ENCODE measurements at regions of chr1 and their contacts with region 1.

Region 1: DNA sequence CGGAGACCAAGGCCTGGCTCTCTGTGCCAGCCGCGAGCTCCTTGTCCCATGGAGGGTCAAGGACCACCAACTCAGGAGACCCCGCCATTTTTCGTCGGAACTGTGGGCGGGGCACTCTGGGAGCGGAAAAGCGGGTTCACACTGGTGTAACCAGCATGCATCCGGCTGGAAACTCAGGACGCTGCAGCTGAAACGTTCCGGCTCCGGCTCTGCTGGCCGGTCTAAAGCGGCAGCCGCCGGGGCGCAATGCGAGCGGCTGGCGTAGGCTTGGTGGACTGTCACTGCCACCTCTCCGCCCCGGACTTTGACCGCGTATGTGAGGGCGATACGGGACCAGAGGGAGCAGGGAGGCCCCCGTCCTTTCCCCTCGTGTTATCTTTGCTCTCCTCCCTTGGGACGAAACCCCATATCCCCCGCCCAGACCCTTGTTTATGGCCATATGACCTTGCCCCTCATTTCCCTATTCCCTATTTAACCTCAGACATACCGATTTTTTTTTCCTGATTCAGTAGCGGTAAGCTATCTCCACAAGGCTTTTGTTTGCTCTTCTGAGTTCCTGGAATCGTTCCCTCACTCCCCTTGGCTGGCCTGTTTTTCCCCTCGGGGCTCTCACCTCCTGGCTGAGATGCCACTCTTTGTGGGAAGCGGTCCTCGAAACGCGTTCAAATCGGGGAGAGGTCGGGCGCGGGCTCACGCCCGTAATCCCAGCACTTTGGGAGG is at the starts of genes NSL1 and TATDN3:
- DNase-seq: peak; percentile 84 to 98 (median 94)
- ATAC-seq: peak; percentile 87
- H3K4me3 ChIP-seq: peak within 1 kb of the TSS; percentile 71
- H3K4me3 Mint-ChIP-seq: peak within 1 kb of the TSS; percentile 96
- H3K27ac ChIP-seq: peak within 1 kb of the TSS; percentile 73 to 77
- H3K27ac Mint-ChIP-seq: peak within 1 kb of the TSS; percentile 90
- H3K4me1 ChIP-seq: peaks cover 31% of the 10 kb centered on the region
- H3K4me1 Mint-ChIP-seq: peaks cover 41% of the 10 kb centered on the region
- H3K27me3 ChIP-seq: no peaks in the 10 kb centered on the region
- H3K27me3 Mint-ChIP-seq: peaks cover 4% of the 10 kb centered on the region
- CTCF ChIP-seq: no peak
- total RNA-seq, gene NSL1: 14.1 to 15.7 TPM
- total RNA-seq, gene TATDN3: 12.2 to 13.8 TPM

Region 2: DNA sequence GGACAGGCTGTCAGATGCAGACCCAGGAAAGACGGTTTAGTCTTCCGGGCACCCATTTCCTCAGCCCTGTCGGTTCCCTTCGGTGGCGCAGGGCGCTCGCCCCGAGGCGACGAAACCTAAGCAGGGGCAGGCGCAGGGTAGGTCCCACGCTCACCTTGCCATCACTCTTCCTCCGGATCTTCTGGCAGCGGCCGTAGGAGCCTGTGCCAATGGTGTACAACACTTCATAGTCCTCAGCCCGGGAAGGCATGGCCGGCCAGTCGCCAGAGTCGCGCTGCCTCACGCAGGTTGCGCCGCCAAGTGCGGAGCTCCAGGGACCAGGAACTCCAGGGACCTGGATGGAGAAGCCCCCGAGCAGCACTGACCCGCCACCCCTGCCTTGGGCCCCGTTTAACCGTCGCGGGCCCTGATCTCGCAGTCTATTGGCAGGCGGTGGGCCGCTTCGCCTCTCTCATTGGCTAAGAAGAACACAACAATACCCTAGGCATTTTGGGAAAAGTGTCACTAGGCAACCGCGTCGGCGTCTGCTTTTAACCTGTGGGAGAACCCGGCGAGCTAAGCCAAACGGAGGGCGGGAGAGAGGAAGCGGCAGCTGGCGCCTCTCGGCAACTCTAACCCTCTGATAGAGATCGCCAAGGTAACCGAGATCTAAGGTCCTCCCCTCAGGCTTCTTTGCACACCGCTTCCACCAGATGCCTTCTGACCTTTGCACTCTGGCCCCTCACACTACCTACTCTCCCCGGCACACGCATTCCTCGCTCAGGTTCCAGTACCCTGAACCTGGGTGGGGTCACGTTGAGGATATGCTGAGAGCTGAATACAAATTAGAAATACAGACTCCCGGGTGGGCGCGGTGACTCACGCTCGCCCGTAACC is 1116.4 kb before region 1 on chr1 and contains the start of gene NEK2:
- CTCF ChIA-PET with region 1: no interaction called
- POLR2A ChIA-PET with region 1: no interaction called
- intact Hi-C with region 1: loop called in 1 of 2 experiments (anchors 10 kb)
- DNase-seq: peak; percentile 70 to 93 (median 79)
- ATAC-seq: peak; percentile 94
- H3K4me3 ChIP-seq: peak within 1 kb of the TSS; percentile 67
- H3K4me3 Mint-ChIP-seq: peak within 1 kb of the TSS; percentile 92
- H3K27ac ChIP-seq: no peak within 1 kb of the TSS
- H3K27ac Mint-ChIP-seq: peak within 1 kb of the TSS; percentile 73
- H3K4me1 ChIP-seq: peaks cover 15% of the 10 kb centered on the region
- H3K4me1 Mint-ChIP-seq: peaks cover 7% of the 10 kb centered on the region
- H3K27me3 ChIP-seq: no peaks in the 10 kb centered on the region
- H3K27me3 Mint-ChIP-seq: no peaks in the 10 kb centered on the region
- CTCF ChIP-seq: no peak
- total RNA-seq, gene NEK2: not detected

Region 3: DNA sequence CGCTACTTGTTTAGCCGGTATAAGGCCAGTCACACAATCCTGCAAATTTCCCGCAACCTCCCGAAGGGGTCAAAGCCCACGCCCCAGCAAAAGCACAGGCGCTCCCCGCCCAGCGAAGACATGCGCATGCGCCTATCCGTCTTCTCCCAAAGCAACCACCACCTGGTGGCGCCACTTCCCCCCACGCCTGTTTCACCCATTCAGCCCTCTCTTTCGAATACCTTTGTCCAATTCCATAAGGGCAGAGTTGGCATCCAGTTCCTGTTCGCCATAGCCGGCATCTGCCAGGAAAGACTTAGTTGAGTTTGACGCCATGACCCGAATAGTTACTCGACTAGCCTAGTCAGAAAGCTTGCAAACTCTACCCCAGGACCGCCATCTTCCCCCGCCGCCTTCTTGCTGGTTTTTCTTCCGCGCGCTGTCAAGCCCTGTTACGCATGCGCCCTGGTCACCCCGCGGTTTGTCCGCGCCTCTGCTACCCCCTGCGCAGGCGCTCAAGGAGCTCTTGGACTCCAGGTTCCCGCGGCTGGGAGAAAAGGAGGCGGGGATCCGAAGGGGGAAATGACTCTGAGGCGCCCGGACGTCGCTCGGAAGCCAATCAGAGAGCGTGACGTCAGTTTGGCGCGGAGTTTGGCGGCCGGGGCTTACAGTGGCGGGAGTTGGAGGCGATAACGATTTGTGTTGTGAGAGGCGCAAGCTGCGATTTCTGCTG is 756.6 kb before region 1 on chr1 and contains the starts of genes DTL and INTS7:
- CTCF ChIA-PET with region 1: no interaction called
- POLR2A ChIA-PET with region 1: no interaction called
- intact Hi-C with region 1: loop called in 1 of 2 experiments (anchors 5 kb)
- DNase-seq: peak; percentile 94 to 100 (median 98)
- ATAC-seq: peak; percentile 88
- H3K4me3 ChIP-seq: peak within 1 kb of the TSS; percentile 83
- H3K4me3 Mint-ChIP-seq: peak within 1 kb of the TSS; percentile 95
- H3K27ac ChIP-seq: peak within 1 kb of the TSS; percentile 55 to 77
- H3K27ac Mint-ChIP-seq: peak within 1 kb of the TSS; percentile 95
- H3K4me1 ChIP-seq: peaks cover 16% of the 10 kb centered on the region
- H3K4me1 Mint-ChIP-seq: peaks cover 66% of the 10 kb centered on the region
- H3K27me3 ChIP-seq: no peaks in the 10 kb centered on the region
- H3K27me3 Mint-ChIP-seq: no peaks in the 10 kb centered on the region
- CTCF ChIP-seq: peak; percentile 99
- total RNA-seq, gene DTL: 0.49 to 0.64 TPM
- total RNA-seq, gene INTS7: 2.9 to 3.2 TPM

Region 4: DNA sequence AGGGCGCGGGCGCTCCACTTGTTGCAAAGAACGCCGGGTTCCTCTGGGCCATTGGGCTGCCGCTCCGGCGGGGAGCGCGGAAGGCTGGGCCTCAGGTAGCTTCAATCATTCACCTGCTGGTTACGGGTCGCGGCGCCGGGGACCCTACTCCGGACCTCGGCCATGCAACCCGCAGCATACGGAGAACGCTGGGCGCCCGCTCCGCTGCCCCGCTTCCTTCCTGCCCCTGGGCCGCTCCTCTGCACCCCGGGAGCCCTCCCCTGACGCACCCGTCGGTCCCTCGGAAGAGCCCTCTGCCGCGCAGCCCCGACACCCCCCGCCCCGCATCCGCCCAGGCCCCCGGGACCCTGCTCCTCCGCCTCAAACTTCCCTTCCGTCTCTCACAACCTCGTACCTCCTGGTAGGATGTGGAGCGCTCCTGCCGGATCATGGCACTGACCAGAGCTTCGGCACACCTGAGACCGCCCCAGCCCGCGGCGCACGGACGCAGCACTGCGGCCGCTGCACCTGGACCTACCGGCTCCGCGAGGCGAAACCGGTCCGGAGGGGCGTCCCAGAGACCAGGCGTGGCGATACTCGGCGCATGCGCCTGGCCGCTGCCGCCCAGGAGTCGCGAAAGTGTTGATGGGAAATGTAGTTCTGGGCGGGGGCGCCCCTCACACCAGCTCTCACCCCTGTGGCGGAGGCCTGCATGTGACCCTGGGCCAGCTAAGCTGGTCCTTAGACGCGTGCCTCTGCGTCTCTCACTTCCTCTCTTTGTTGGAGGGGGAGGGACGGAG is 377.3 kb before region 1 on chr1 and contains the start of gene PACC1:
- CTCF ChIA-PET with region 1: no interaction called
- POLR2A ChIA-PET with region 1: no interaction called
- intact Hi-C with region 1: loop called in 1 of 2 experiments (anchors 5 kb)
- DNase-seq: peak; percentile 70 to 95 (median 81)
- ATAC-seq: peak; percentile 85
- H3K4me3 ChIP-seq: peak within 1 kb of the TSS; percentile 76
- H3K4me3 Mint-ChIP-seq: peak within 1 kb of the TSS; percentile 89
- H3K27ac ChIP-seq: peak within 1 kb of the TSS; percentile 40 to 72
- H3K27ac Mint-ChIP-seq: peak within 1 kb of the TSS; percentile 82
- H3K4me1 ChIP-seq: peaks cover 30% of the 10 kb centered on the region
- H3K4me1 Mint-ChIP-seq: peaks cover 22% of the 10 kb centered on the region
- H3K27me3 ChIP-seq: no peaks in the 10 kb centered on the region
- H3K27me3 Mint-ChIP-seq: no peaks in the 10 kb centered on the region
- CTCF ChIP-seq: no peak
- total RNA-seq, gene PACC1: 1.8 to 2.1 TPM

Region 5: GRCh38 chr1:212749821-212750535 is 41.9 kb before region 1 on chr1:
- CTCF ChIA-PET with region 1: no interaction called
- POLR2A ChIA-PET with region 1: interaction called, 11 read pairs
- intact Hi-C with region 1: loop called in 1 of 2 experiments (anchors 5 kb)
- DNase-seq: peak in 4 of 14 experiments; percentile 13 to 67 (median 42)
- ATAC-seq: peak; percentile 27
- H3K4me3 ChIP-seq: no peak overlapping the region
- H3K4me3 Mint-ChIP-seq: peak overlapping the region; percentile 4
- H3K27ac ChIP-seq: peak overlapping the region in 1 of 2 donors; percentile 14
- H3K27ac Mint-ChIP-seq: peak overlapping the region; percentile 78
- H3K4me1 ChIP-seq: peaks cover 29% of the 10 kb centered on the region
- H3K4me1 Mint-ChIP-seq: peaks cover 54% of the 10 kb centered on the region
- H3K27me3 ChIP-seq: no peaks in the 10 kb centered on the region
- H3K27me3 Mint-ChIP-seq: no peaks in the 10 kb centered on the region
- CTCF ChIP-seq: peak; percentile 69

Region 6: DNA sequence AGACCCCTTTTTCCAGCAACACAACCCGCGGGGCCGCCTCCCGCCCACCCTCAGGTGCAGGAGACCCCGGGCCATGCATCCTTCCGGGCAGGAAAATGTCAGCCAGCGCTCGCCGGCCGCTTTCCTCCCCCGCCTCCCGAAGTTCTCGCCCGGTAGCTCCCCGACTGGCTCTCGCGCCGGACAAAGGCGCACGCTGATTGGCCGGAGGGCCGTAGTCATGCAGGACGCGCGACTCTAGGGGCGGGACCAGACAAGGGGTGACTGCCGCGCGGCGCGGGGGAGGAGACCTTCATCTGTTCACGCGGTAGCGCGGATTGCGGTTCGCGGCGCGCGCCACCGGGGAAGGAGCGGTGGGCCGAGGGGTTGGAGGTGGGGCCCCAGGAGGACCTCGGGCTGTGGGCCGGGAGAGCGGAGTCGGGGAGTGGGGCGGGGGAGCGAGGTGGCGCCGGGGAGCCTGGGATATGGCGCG is 66.2 kb after region 1 on chr1 and contains the start of gene FLVCR1:
- CTCF ChIA-PET with region 1: no interaction called
- POLR2A ChIA-PET with region 1: interaction called, 15 read pairs
- intact Hi-C with region 1: loop called in 1 of 2 experiments (anchors 2 kb)
- DNase-seq: peak; percentile 78 to 95 (median 86)
- ATAC-seq: peak; percentile 95
- H3K4me3 ChIP-seq: peak within 1 kb of the TSS; percentile 92
- H3K4me3 Mint-ChIP-seq: peak within 1 kb of the TSS; percentile 72
- H3K27ac ChIP-seq: peak within 1 kb of the TSS; percentile 55 to 63
- H3K27ac Mint-ChIP-seq: peak within 1 kb of the TSS; percentile 89
- H3K4me1 ChIP-seq: peaks cover 33% of the 10 kb centered on the region
- H3K4me1 Mint-ChIP-seq: peaks cover 18% of the 10 kb centered on the region
- H3K27me3 ChIP-seq: no peaks in the 10 kb centered on the region
- H3K27me3 Mint-ChIP-seq: no peaks in the 10 kb centered on the region
- CTCF ChIP-seq: no peak
- total RNA-seq, gene FLVCR1: 8.4 to 9.5 TPM

Region 7: GRCh38 chr1:212884592-212884991 is 92.8 kb after region 1 on chr1:
- CTCF ChIA-PET with region 1: no interaction called
- POLR2A ChIA-PET with region 1: no interaction called
- intact Hi-C with region 1: no loop called
- DNase-seq: no peak
- ATAC-seq: no peak
- H3K4me3 ChIP-seq: no peak overlapping the region
- H3K4me3 Mint-ChIP-seq: no peak overlapping the region
- H3K27ac ChIP-seq: no peak overlapping the region
- H3K27ac Mint-ChIP-seq: no peak overlapping the region
- H3K4me1 ChIP-seq: no peaks in the 10 kb centered on the region
- H3K4me1 Mint-ChIP-seq: no peaks in the 10 kb centered on the region
- H3K27me3 ChIP-seq: no peaks in the 10 kb centered on the region
- H3K27me3 Mint-ChIP-seq: no peaks in the 10 kb centered on the region
- CTCF ChIP-seq: no peak

Region 8: DNA sequence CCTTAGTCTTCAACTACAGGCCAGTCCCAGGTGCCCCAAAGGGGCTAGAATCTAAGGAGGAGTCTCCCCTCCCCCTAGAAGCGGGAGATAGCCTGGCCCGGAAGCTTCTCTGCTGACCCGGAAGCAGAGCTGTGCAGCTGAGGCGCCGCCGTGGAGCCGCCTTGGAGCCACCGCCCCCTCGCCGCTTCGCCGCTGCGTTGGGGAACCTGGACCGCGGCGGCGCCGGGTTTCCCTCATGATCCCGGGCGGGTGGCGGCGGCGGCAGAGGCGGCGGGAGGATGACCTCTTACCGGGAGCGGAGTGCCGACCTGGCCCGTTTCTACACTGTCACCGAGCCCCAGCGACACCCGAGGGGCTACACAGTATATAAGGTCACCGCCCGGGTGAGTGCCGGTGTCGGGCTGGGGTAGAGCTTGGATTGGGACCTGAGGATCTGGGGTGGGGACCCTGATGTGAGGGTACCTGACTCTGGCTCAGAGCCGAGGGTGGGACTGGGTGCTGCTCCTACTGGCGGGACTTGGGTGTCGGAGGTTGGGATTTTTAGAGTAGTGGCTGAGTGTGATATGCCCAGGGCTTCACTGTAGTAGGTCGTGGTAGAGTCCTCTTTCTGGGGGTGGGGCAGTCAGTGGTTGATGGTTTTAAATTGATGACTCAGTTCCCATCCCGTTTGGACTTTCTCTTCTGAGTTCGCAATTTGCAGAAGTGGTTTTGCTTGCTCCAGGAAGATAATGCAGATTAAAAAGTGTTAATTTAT is 259.5 kb after region 1 on chr1 and contains the start of gene RPS6KC1:
- CTCF ChIA-PET with region 1: no interaction called
- POLR2A ChIA-PET with region 1: interaction called, 5 read pairs
- intact Hi-C with region 1: loop called in 1 of 2 experiments (anchors 2 kb)
- DNase-seq: peak; percentile 69 to 90 (median 76)
- ATAC-seq: peak; percentile 97
- H3K4me3 ChIP-seq: peak within 1 kb of the TSS; percentile 82
- H3K4me3 Mint-ChIP-seq: peak within 1 kb of the TSS; percentile 90
- H3K27ac ChIP-seq: peak within 1 kb of the TSS; percentile 50 to 72
- H3K27ac Mint-ChIP-seq: peak within 1 kb of the TSS; percentile 84
- H3K4me1 ChIP-seq: peaks cover 17% of the 10 kb centered on the region
- H3K4me1 Mint-ChIP-seq: peaks cover 39% of the 10 kb centered on the region
- H3K27me3 ChIP-seq: peaks cover 0 to 7% of the 10 kb centered on the region in 2 experiments
- H3K27me3 Mint-ChIP-seq: peaks cover 26% of the 10 kb centered on the region
- CTCF ChIP-seq: no peak
- total RNA-seq, gene RPS6KC1: 6.2 to 7.0 TPM